GM12878 (cell line): ENCODE measurements at regions of chr3 and their contacts with region 1.

Region 1: DNA sequence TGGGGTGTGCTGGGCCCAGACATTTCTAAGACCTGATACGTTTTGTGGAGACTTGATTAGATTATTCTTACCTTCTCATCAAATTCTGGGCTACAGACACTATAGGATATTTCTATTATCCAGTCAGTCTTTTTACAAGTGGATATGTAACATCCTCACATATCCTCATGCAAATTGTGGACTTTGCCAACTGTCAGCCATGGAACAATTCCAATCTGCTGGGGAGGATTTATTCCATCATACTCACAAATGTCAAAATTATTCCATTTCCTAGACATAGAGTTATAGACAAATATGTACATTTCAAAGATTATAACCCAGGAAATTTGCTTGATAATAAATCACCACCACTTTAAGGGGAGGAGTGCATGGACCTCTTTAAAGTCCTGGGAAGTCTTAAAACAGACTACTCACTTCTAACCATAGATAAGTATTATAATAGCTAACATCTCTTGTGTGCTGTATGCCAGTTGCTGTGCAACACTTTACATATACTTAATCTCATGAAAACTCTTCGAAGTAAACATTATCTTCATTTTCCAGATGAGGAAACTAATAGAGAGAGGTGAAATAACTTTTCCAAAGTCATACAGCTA is 44.4 kb downstream of the CADPS start:
- DNase-seq: no peak
- ATAC-seq: no peak
- H3K4me3 ChIP-seq: no peak overlapping the region
- H3K27ac ChIP-seq: no peak overlapping the region
- H3K4me1 ChIP-seq: no peaks in the 10 kb centered on the region
- H3K27me3 ChIP-seq: no peaks in the 10 kb centered on the region; a peak in 1 of 4 replicates
- CTCF ChIP-seq: no peak
- EP300 ChIP-seq: no peak
- POLR2A ChIP-seq: no peak
- RAD21 ChIP-seq: no peak

Region 2: GRCh38 chr3:62582495-62583172 is 248.2 kb before region 1 on chr3:
- CTCF ChIA-PET with region 1: no interaction called
- POLR2A ChIA-PET with region 1: no interaction called
- RAD21 ChIA-PET with region 1: no interaction called
- SMC1A ChIA-PET with region 1: no interaction called
- in situ Hi-C with region 1: no loop called
- intact Hi-C with region 1: no loop called
- DNase-seq: no peak
- ATAC-seq: no peak
- H3K4me3 ChIP-seq: no peak overlapping the region
- H3K27ac ChIP-seq: no peak overlapping the region
- H3K4me1 ChIP-seq: no peaks in the 10 kb centered on the region
- H3K27me3 ChIP-seq: no peaks in the 10 kb centered on the region
- CTCF ChIP-seq: no peak
- EP300 ChIP-seq: no peak
- POLR2A ChIP-seq: no peak
- RAD21 ChIP-seq: no peak

Region 3: GRCh38 chr3:63064209-63064942 is 233.6 kb after region 1 on chr3:
- CTCF ChIA-PET with region 1: no interaction called
- POLR2A ChIA-PET with region 1: no interaction called
- RAD21 ChIA-PET with region 1: no interaction called
- SMC1A ChIA-PET with region 1: no interaction called
- in situ Hi-C with region 1: no loop called
- intact Hi-C with region 1: loop called (anchors 2 kb)
- DNase-seq: no peak
- ATAC-seq: no peak
- H3K4me3 ChIP-seq: no peak overlapping the region
- H3K27ac ChIP-seq: no peak overlapping the region
- H3K4me1 ChIP-seq: no peaks in the 10 kb centered on the region
- H3K27me3 ChIP-seq: no peaks in the 10 kb centered on the region
- CTCF ChIP-seq: no peak
- EP300 ChIP-seq: no peak
- POLR2A ChIP-seq: no peak
- RAD21 ChIP-seq: no peak